ENCODE measurements at regions of chr10 and their contacts with region 1.

Region 1: GRCh38 chr10:26468700-26469099 is 30.6 kb downstream of the APBB1IP start:
- DNase-seq: peak in 8 of 9 donors; percentile 20 to 82 (median 76)
- ATAC-seq: peak; percentile 94
- H3K4me3 ChIP-seq: peak overlapping the region; percentile 1
- H3K4me3 Mint-ChIP-seq: peak overlapping the region; percentile 66 to 93 (median 84)
- H3K27ac ChIP-seq: peak overlapping the region; percentile 33
- H3K27ac Mint-ChIP-seq: peak overlapping the region; percentile 83 to 96 (median 91)
- H3K4me1 ChIP-seq: peaks cover 64 to 76% of the 10 kb centered on the region in 2 donors
- H3K4me1 Mint-ChIP-seq: peaks cover 61 to 100% (median 92%) of the 10 kb centered on the region in 7 donors
- H3K27me3 ChIP-seq: no peaks in the 10 kb centered on the region
- H3K27me3 Mint-ChIP-seq: no peaks in the 10 kb centered on the region

Region 2: DNA sequence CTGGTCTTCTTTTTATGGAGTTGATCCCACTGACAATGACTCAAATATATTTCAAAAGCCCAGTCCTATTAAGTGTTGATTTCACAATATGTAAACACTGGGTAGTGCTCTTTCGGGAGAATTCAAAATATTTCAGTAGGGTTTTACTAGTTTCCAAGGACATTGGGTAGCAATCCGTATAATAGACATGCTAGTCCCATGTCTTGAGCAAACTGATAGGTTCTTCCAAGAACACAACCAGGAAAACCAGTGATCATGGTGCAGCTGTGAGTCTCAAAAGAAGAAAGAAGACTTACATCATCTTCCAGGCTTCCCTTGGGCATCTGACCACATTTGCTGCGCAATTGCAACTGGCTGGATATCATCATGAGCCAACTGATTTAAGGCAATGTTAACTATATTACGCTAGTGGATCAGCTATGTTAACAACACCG is 89.8 kb before region 1 on chr10:
- CTCF ChIA-PET with region 1: no interaction called
- POLR2A ChIA-PET with region 1: no interaction called
- intact Hi-C with region 1: no loop called
- DNase-seq: no peak
- ATAC-seq: no peak
- H3K4me3 ChIP-seq: no peak overlapping the region
- H3K4me3 Mint-ChIP-seq: no peak overlapping the region
- H3K27ac ChIP-seq: no peak overlapping the region
- H3K27ac Mint-ChIP-seq: no peak overlapping the region
- H3K4me1 ChIP-seq: no peaks in the 10 kb centered on the region
- H3K4me1 Mint-ChIP-seq: peaks cover 0 to 1% (median 0%) of the 10 kb centered on the region in 7 donors
- H3K27me3 ChIP-seq: no peaks in the 10 kb centered on the region
- H3K27me3 Mint-ChIP-seq: peaks cover 0 to 10% (median 0%) of the 10 kb centered on the region in 5 donors

Region 3: DNA sequence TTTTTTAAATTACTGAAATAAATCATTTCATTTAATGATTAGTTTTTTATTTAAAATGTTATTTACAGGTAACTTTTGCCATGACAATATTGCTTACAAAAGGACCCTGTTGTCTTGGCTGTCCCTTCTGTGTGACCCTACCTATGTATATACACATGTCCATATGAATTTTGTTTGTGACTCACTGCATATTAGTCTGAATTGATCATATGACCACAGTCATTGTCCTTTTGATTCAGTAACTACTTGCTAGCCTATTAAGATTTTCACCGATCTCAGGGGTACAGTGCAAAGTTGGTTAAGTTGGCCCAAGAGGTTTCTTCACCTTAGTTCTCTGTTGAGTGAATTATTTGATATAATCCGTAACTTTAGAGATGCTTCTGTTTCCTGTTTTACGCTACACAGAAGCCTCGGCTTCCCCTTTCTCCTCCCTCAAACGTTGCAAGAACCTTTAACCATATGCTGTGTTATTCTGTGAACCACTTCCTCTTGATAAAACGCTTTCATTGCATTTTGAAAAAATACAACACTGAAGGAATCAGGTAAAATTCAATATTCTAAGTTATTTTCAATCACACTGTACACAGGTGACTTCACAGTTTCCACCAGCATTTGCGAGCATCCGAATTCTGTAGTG is 13.3 kb after region 1 on chr10:
- CTCF ChIA-PET with region 1: interaction called, 7 read pairs
- POLR2A ChIA-PET with region 1: interaction called, 19 read pairs
- intact Hi-C with region 1: loop called (anchors 1 kb)
- DNase-seq: peak in 7 of 9 donors; percentile 65 to 90 (median 84)
- ATAC-seq: peak; percentile 91
- H3K4me3 ChIP-seq: peak overlapping the region; percentile 46
- H3K4me3 Mint-ChIP-seq: peak overlapping the region; percentile 68 to 88 (median 76)
- H3K27ac ChIP-seq: peak overlapping the region; percentile 71
- H3K27ac Mint-ChIP-seq: peak overlapping the region; percentile 85 to 97 (median 95)
- H3K4me1 ChIP-seq: peaks cover 81 to 85% of the 10 kb centered on the region in 2 donors
- H3K4me1 Mint-ChIP-seq: peaks cover 60 to 85% (median 79%) of the 10 kb centered on the region in 7 donors
- H3K27me3 ChIP-seq: no peaks in the 10 kb centered on the region
- H3K27me3 Mint-ChIP-seq: no peaks in the 10 kb centered on the region